GM10248 (cell line): ENCODE measurements at regions of chr6 and their contacts with region 1.

Region 1: DNA sequence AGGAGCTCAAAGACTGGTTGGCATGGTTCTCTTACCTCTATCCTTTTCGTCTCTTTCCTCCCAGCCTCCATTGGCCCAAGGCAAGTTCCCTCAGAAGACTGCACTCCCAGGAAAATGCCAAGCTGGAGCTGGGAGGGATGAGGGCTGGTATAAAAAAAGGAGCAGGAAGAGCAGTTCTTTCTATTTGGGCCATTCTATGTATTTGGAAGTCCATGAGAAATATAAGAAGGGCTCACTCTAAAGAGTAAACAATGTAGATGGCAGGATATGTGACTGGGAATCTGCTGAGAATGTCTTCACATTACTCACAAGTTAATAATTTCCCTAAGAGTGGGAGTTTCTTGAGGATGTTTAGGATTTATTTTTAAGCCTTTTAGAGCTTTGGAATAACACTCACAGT is 36.6 kb upstream of the ADTRP start:
- DNase-seq: no peak
- CTCF ChIP-seq: no peak

Region 2: DNA sequence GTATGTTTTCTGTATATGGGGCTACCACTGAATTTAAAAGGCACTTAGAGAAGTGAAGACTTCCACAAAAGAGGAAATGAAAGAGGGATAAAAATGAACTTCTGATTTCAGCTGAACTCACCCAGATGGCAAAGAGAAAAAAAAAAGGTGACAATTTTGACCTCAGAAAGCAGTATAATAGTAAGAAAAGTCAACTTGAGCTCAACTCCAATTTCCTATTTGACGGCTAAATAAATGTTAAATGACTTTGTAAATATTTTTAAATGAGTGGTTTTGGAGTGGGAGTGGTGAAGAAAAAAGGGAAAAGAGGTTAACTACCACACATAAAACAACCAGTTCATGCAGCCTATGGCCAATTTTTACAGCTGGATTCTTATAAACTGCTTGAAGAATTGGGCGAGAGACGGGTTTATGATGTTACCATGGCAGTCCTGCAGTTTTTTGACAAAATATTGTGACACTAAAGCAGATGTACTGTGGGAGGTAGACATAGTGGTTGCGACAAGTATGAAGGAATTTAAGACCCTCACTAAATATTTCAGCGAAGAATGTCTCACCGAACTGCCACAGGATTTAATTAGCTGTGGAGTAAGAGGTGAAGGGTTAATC is 13.1 kb after region 1 on chr6:
- CTCF ChIA-PET with region 1: interaction called, 11 read pairs
- POLR2A ChIA-PET with region 1: no interaction called
- DNase-seq: peak; percentile 50
- CTCF ChIP-seq: no peak

Region 3: GRCh38 chr6:11833626-11834592 is 18.7 kb after region 1 on chr6:
- CTCF ChIA-PET with region 1: interaction called, 11 read pairs
- POLR2A ChIA-PET with region 1: no interaction called
- DNase-seq: peak; percentile 60
- CTCF ChIP-seq: no peak

Region 4: GRCh38 chr6:12075067-12075563 is 259.9 kb after region 1 on chr6:
- CTCF ChIA-PET with region 1: no interaction called
- POLR2A ChIA-PET with region 1: no interaction called
- DNase-seq: no peak
- CTCF ChIP-seq: peak; percentile 43